Ascending aorta (tissue), 2 donors: ENCODE measurements at regions of chr13 and their contacts with region 1.

Region 1: GRCh38 chr13:27533155-27533643 is 82.8 kb upstream of the MTIF3 start:
- DNase-seq: peak; percentile 18 to 84
- H3K4me3 ChIP-seq: no peak overlapping the region
- H3K27ac ChIP-seq: no peak overlapping the region
- H3K4me1 ChIP-seq: no peaks in the 10 kb centered on the region
- H3K27me3 ChIP-seq: no peaks in the 10 kb centered on the region
- CTCF ChIP-seq: peak; percentile 78 to 88 (median 86)

Region 2: DNA sequence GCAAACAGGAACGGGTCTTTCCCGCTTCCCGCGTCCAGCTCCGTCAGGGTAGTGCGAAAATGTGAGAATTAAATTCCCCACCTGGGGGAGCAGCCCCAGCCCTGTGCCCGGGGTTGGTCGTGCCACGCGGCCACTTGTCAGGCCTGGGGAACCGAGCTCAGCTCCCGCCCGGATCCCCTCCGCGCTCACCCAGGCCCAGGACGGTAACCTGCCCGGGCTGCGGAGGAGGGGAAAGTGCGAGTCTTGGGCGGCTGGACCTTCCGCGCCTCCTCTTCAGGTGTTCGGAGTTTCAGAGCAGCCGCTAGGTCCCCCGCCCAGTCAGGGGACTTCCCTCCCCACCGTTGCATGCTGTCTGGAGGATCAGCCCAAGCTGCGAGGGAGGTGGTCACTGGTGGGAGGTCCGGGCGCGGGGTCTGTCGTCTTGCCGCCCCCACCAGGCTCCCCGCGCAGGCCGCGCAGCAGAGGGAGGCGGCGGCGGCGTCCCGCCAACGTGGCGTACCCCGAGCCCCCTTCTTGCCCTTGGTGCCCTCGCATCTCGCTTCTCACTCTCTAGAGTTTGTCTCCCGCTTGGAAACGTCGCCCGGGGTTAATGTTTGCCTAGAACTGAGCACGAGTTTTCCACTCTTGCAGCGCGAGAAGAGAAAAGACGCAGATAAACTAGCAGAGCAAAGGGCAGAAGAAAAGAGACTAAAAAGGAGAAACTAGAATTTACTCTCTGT is 447.2 kb after region 1 on chr13:
- intact Hi-C with region 1: loop called (anchors 10 kb)
- DNase-seq: no peak
- H3K4me3 ChIP-seq: peak overlapping the region in 1 of 2 donors; percentile 17
- H3K27ac ChIP-seq: no peak overlapping the region
- H3K4me1 ChIP-seq: peaks cover 2 to 10% of the 10 kb centered on the region in 2 donors
- H3K27me3 ChIP-seq: peaks cover 13% of the 10 kb centered on the region
- CTCF ChIP-seq: no peak